Dorsolateral prefrontal cortex (tissue), 120 donors: ENCODE measurements at regions of chr6 and their contacts with region 1.

Region 1: GRCh38 chr6:68728159-68728979 is 93.3 kb downstream of the ADGRB3 start:
- DNase-seq: no peak
- H3K4me3 ChIP-seq: peak overlapping the region in 4 of 59 donors; percentile 49 to 66 (median 53)
- H3K27ac ChIP-seq: peak overlapping the region in 58 of 59 donors; percentile 0 to 92 (median 81)
- H3K27me3 ChIP-seq: no peaks in the 10 kb centered on the region
- CTCF ChIP-seq: no peak

Region 2: DNA sequence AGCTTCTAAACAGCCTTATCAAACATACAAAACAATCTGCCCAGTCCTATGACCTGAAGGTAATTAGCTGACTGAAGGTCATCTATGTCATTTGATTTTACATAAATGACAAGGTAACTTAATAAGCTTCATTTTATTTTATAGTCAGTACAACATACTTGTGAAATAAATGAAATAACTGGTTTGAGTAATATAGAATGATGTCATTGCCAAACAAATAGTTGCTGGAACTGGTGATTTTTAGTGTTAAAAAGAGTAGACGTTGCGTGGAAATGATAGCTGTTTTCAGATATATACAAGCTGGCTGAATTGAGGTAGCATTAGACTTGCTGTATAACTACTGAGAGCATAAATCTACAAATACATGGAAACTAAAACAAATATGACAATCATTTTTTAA is 211.6 kb before region 1 on chr6:
- intact Hi-C with region 1: no loop called
- DNase-seq: no peak
- H3K4me3 ChIP-seq: no peak overlapping the region
- H3K27ac ChIP-seq: no peak overlapping the region
- H3K27me3 ChIP-seq: no peaks in the 10 kb centered on the region
- CTCF ChIP-seq: no peak

Region 3: GRCh38 chr6:68639826-68640490 is 88.4 kb before region 1 on chr6:
- intact Hi-C with region 1: loop called in 1 of 2 experiments (anchors 2 kb)
- DNase-seq: peak in 1 of 10 donors; percentile 41
- H3K4me3 ChIP-seq: peak overlapping the region; percentile 66 to 96 (median 83)
- H3K27ac ChIP-seq: peak overlapping the region; percentile 55 to 99 (median 97)
- H3K27me3 ChIP-seq: no peaks in the 10 kb centered on the region
- CTCF ChIP-seq: peak in 4 of 56 donors; percentile 4 to 37 (median 12)

Region 4: GRCh38 chr6:68677058-68677457 is 51.3 kb before region 1 on chr6:
- intact Hi-C with region 1: no loop called
- DNase-seq: no peak
- H3K4me3 ChIP-seq: no peak overlapping the region
- H3K27ac ChIP-seq: peak overlapping the region in 1 of 59 donors; percentile 31
- H3K27me3 ChIP-seq: no peaks in the 10 kb centered on the region
- CTCF ChIP-seq: no peak